MCF 10A (cell line): ENCODE measurements at regions of chr1 and their contacts with region 1.

Region 1: GRCh38 chr1:202348509-202349205 is at the start of gene PPP1R12B:
- DNase-seq: peak; percentile 100
- H3K4me3 Mint-ChIP-seq: peak within 1 kb of the TSS; percentile 81
- H3K27ac Mint-ChIP-seq: peak within 1 kb of the TSS; percentile 78
- H3K4me1 Mint-ChIP-seq: peaks cover 33% of the 10 kb centered on the region
- H3K27me3 Mint-ChIP-seq: no peaks in the 10 kb centered on the region
- CTCF ChIP-seq: no peak
- total RNA-seq, gene PPP1R12B: 31.1 and 33.8 TPM in 2 replicates

Region 2: GRCh38 chr1:202365092-202365815 is 16.6 kb after region 1 on chr1:
- CTCF ChIA-PET with region 1: interaction called, 6 read pairs
- POLR2A ChIA-PET with region 1: interaction called, 17 read pairs
- intact Hi-C with region 1: no loop called
- DNase-seq: peak; percentile 58
- H3K4me3 Mint-ChIP-seq: peak overlapping the region; percentile 2
- H3K27ac Mint-ChIP-seq: peak overlapping the region; percentile 18
- H3K4me1 Mint-ChIP-seq: peaks cover 12% of the 10 kb centered on the region
- H3K27me3 Mint-ChIP-seq: no peaks in the 10 kb centered on the region
- CTCF ChIP-seq: no peak

Region 3: DNA sequence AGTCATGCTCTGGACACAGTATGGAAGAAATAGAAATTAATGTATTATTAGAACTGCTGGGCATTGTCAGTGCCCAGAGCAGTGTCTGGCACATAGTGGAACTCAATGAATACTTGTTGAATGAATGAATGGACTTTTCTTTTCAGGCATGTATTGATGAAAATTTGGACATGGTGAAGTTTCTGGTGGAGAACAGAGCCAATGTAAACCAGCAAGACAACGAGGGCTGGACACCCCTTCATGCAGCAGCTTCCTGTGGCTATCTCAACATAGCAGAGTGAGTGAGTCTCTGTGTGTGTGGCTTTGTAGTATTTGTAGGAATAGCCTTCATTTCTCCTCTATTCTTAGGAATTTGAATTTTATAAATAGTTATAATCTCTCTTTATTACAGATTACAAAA is 68.0 kb after region 1 on chr1:
- CTCF ChIA-PET with region 1: interaction called, 4 read pairs
- POLR2A ChIA-PET with region 1: interaction called, 13 read pairs
- intact Hi-C with region 1: no loop called
- DNase-seq: no peak
- H3K4me3 Mint-ChIP-seq: no peak overlapping the region
- H3K27ac Mint-ChIP-seq: no peak overlapping the region
- H3K4me1 Mint-ChIP-seq: peaks cover 6% of the 10 kb centered on the region
- H3K27me3 Mint-ChIP-seq: no peaks in the 10 kb centered on the region
- CTCF ChIP-seq: no peak

Region 4: DNA sequence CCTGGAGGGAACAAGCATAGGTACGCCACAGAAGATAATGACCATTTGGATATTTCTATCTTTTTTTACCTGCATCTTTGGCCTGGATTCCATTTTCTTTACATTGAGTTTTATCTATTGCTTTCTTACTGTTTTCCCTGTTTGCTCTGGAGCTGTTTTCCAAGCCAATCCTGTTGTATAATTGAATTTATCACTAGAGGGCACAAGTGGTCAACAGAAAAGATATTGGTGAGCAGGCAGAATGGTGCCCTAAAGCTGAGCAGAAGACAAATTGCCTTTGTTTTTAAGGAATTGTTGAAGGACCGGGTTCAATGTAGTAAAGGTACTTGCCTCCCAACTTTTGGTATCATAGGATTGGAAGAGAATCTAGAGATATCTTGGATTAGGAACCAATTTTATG is 152.6 kb after region 1 on chr1:
- CTCF ChIA-PET with region 1: no interaction called
- POLR2A ChIA-PET with region 1: no interaction called
- intact Hi-C with region 1: loop called (anchors 5 kb)
- DNase-seq: peak; percentile 64
- H3K4me3 Mint-ChIP-seq: no peak overlapping the region
- H3K27ac Mint-ChIP-seq: no peak overlapping the region
- H3K4me1 Mint-ChIP-seq: peaks cover 10% of the 10 kb centered on the region
- H3K27me3 Mint-ChIP-seq: no peaks in the 10 kb centered on the region
- CTCF ChIP-seq: peak; percentile 89